SK-MEL-5 (cell line): ENCODE measurements at regions of chr5 and their contacts with region 1.

Region 1: DNA sequence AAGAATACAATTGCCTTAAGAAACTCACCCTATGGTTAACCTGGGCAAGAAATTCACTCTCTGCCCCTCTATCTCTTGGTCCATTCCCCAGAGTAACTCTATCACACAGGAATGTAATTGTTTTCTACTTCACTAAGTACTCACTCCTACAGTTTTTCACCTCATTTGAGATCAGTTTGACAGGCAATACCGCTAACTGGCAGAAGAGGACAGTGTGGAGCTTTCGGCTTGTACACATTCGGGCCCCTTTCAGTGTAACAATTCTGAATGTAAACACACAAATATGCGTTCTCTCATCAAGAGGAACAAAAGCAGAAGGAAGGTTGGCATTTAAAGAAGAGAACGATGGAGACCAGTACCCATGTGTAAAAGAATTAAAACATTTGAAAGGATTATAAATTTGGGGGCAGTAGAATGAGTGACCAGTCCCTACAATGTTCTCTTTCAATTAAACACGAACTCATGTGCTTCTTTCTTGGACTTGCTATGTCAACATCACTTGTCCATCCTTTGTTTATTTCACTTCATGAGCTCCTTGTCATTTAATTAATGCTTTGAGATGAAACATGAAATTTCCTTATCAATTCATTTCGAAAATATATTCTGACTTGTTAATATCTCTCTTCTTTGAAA is 188.5 kb upstream of the GRAMD2B start:
- DNase-seq: peak; percentile 68

Region 2: DNA sequence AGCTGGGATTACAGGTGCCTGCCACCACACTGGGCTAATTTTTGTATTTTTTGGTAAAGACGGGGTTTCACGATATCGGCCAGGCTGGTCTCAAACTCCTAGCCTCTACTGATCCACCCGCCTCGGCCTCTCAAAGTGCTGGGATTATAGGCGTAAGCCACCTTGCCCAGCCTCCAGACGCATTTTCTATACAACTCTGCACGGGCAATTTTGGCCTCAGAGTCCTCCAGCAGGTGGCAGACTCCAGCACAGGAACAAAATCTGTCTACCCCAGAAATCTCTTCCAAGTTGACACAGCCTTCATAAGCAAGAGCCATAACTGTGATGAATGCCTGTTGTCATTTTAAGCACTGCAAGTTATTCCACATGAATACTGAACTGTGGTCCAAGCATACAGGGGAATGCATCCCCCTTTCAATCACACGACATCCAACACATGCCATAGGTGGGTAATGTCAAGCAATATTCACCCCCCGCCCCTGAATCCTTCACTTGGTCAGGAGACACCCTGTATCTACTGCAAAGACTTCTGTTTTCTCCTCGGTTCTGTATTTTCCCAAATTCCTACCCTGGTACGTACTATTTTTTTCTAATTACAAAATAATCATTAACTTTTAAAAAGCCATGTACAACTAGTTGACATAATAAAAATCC is 309.5 kb after region 1 on chr5:
- in situ Hi-C with region 1: loop called (anchors 10 kb)
- DNase-seq: peak; percentile 83